ENCODE measurements at regions of chr4 and their contacts with region 1.

Region 1: DNA sequence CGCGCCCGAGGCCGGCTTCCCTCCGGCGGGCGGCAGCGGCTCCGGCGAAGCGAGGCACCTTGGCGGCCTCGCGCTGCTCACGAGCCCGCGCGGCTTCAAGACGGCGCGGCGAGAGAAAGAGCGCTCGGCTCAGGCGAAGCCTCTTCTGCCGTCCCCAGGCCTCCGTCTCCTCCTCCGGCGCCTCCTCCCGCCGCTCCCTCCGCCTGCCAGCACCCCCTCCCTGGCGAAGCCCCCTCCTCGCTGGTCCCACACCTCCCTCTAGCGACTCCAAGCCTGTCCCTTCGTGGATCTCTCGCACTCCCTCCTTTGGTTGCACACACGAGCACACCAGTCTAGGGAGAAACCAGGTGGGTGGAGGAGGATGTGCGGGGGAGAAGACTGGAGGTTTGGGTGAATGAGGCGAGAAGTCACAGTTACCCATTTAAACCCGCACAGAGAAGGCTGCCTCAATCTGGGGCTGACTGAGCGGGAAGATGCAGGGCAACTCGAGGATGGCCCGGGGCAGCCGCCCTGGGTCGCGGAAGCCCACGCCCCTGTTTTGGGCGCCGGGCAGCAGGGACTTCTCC is at the start of gene CAMK2D:
- DNase-seq: peak; percentile 82 to 93 (median 85)
- H3K4me3 ChIP-seq: peak within 1 kb of the TSS; percentile 73 to 87
- H3K4me3 Mint-ChIP-seq: peak within 1 kb of the TSS; percentile 93 to 98 (median 96)
- H3K27ac ChIP-seq: peak within 1 kb of the TSS; percentile 92
- H3K27ac Mint-ChIP-seq: peak within 1 kb of the TSS; percentile 91 to 100 (median 99)
- H3K4me1 ChIP-seq: peaks cover 36% of the 10 kb centered on the region
- H3K4me1 Mint-ChIP-seq: peaks cover 24 to 54% (median 25%) of the 10 kb centered on the region in 4 donors
- H3K27me3 ChIP-seq: no peaks in the 10 kb centered on the region
- H3K27me3 Mint-ChIP-seq: no peaks in the 10 kb centered on the region
- total RNA-seq, gene CAMK2D: 32.1 to 36.4 TPM

Region 2: DNA sequence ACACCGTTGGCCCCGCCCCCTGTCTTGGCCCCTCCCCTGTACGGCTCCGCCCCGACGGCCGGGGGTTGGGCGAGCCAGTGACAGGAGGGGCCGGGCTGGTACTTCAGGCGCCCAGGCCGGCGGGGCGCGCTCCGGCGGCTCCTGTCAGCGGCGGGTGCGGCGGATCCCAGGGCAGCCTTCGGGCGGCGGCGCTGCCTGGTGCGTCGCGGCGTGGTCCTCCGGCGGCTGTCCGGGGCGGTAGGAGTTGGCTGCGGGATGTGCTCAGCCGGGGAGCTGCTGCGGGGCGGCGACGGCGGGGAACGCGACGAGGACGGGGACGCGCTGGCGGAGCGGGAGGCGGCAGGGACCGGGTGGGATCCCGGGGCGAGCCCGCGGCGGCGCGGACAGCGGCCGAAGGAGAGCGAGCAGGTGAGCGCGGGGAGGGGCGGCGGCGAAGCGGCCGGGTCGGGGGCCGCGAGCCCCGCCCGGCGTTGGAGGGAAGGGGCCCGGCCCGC is 1616.3 kb before region 1 on chr4 and contains the start of gene FAM241A:
- CTCF ChIA-PET with region 1: no interaction called
- POLR2A ChIA-PET with region 1: no interaction called
- intact Hi-C with region 1: loop called (anchors 10 kb)
- DNase-seq: peak; percentile 86 to 89 (median 86)
- H3K4me3 ChIP-seq: peak within 1 kb of the TSS; percentile 82 to 88
- H3K4me3 Mint-ChIP-seq: peak within 1 kb of the TSS; percentile 87 to 99 (median 94)
- H3K27ac ChIP-seq: peak within 1 kb of the TSS; percentile 82
- H3K27ac Mint-ChIP-seq: peak within 1 kb of the TSS; percentile 85 to 99 (median 96)
- H3K4me1 ChIP-seq: peaks cover 29% of the 10 kb centered on the region
- H3K4me1 Mint-ChIP-seq: peaks cover 22 to 34% (median 26%) of the 10 kb centered on the region in 4 donors
- H3K27me3 ChIP-seq: no peaks in the 10 kb centered on the region
- H3K27me3 Mint-ChIP-seq: no peaks in the 10 kb centered on the region
- total RNA-seq, gene FAM241A: 2.7 TPM

Region 3: GRCh38 chr4:113355550-113356371 is 405.9 kb before region 1 on chr4:
- CTCF ChIA-PET with region 1: no interaction called
- POLR2A ChIA-PET with region 1: no interaction called
- intact Hi-C with region 1: loop called (anchors 5 kb)
- DNase-seq: peak; percentile 57 to 87 (median 62)
- H3K4me3 ChIP-seq: peak overlapping the region in 1 of 2 donors; percentile 15
- H3K4me3 Mint-ChIP-seq: peak overlapping the region; percentile 71 to 82 (median 78)
- H3K27ac ChIP-seq: no peak overlapping the region
- H3K27ac Mint-ChIP-seq: peak overlapping the region; percentile 80 to 91 (median 85)
- H3K4me1 ChIP-seq: peaks cover 19% of the 10 kb centered on the region
- H3K4me1 Mint-ChIP-seq: peaks cover 18 to 32% (median 27%) of the 10 kb centered on the region in 4 donors
- H3K27me3 ChIP-seq: no peaks in the 10 kb centered on the region
- H3K27me3 Mint-ChIP-seq: peaks cover 0 to 1% of the 10 kb centered on the region in 2 donors

Region 4: GRCh38 chr4:113564493-113564892 is 197.2 kb before region 1 on chr4:
- CTCF ChIA-PET with region 1: no interaction called
- POLR2A ChIA-PET with region 1: no interaction called
- intact Hi-C with region 1: loop called (anchors 5 kb)
- DNase-seq: no peak
- H3K4me3 ChIP-seq: no peak overlapping the region
- H3K4me3 Mint-ChIP-seq: peak overlapping the region in 6 of 8 donors; percentile 58 to 88 (median 73)
- H3K27ac ChIP-seq: no peak overlapping the region
- H3K27ac Mint-ChIP-seq: peak overlapping the region in 1 of 7 donors; percentile 59
- H3K4me1 ChIP-seq: peaks cover 38% of the 10 kb centered on the region
- H3K4me1 Mint-ChIP-seq: peaks cover 33 to 52% (median 41%) of the 10 kb centered on the region in 4 donors
- H3K27me3 ChIP-seq: no peaks in the 10 kb centered on the region
- H3K27me3 Mint-ChIP-seq: no peaks in the 10 kb centered on the region

Region 5: DNA sequence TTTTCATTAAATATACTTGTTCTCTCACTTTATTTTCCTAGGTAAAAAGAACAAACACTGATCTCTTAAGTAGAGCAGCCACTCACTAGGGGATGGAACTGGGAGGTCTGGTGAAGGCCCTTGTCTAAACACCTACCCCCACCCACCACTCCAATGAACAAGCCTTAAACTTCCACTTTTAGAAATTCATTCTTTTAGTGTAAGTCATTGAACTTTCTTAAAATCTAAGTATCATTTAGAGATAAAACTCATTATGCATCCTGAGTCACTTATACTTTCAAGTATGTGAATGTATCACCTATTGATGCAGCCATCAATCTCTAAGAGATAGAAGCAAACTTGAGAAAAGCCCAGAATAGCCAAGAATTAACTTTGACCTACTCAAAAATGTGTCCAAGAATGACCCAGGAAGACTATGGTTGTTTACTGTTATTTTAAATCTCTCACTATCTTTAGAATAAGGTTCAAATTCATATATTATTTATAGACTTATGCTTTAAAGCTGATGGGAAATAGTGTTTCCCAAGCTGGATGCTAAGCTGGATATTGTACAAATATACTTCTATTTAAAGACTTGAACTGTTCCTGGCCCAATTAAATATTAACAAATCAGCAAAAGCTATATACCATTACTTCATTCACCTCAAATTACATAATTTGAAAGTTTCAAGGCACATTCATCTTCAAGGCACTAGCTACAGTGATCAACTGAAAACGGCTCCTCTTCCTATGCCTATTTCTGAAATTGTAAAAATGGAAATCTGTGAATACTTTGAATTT is 49.6 kb before region 1 on chr4:
- CTCF ChIA-PET with region 1: no interaction called
- POLR2A ChIA-PET with region 1: no interaction called
- intact Hi-C with region 1: loop called (anchors 2 kb)
- DNase-seq: no peak
- H3K4me3 ChIP-seq: no peak overlapping the region
- H3K4me3 Mint-ChIP-seq: no peak overlapping the region
- H3K27ac ChIP-seq: no peak overlapping the region
- H3K27ac Mint-ChIP-seq: no peak overlapping the region
- H3K4me1 ChIP-seq: no peaks in the 10 kb centered on the region
- H3K4me1 Mint-ChIP-seq: peaks cover 13 to 24% (median 21%) of the 10 kb centered on the region in 4 donors
- H3K27me3 ChIP-seq: no peaks in the 10 kb centered on the region
- H3K27me3 Mint-ChIP-seq: no peaks in the 10 kb centered on the region

Region 6: DNA sequence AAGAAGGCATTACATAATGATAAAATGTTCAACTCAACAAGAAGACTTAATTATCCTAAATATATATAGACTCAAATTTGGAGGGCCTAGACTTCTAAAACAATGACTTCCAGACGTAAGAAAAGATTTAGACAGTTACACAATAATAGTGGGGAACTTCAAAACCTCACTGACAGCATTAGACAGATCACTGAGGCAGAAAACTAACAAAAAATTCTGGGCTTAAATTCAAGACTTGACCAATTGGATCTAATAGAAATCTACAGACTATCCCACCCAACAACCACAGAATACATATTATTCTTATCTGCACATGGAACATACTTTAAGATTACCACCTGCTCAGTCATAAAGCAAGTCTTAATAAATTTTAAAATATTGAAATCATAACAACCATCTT is 311.1 kb after region 1 on chr4:
- CTCF ChIA-PET with region 1: no interaction called
- POLR2A ChIA-PET with region 1: no interaction called
- intact Hi-C with region 1: loop called (anchors 5 kb)
- DNase-seq: no peak
- H3K4me3 ChIP-seq: no peak overlapping the region
- H3K4me3 Mint-ChIP-seq: no peak overlapping the region
- H3K27ac ChIP-seq: no peak overlapping the region
- H3K27ac Mint-ChIP-seq: no peak overlapping the region
- H3K4me1 ChIP-seq: no peaks in the 10 kb centered on the region
- H3K4me1 Mint-ChIP-seq: peaks cover 0 to 5% (median 3%) of the 10 kb centered on the region in 4 donors
- H3K27me3 ChIP-seq: no peaks in the 10 kb centered on the region
- H3K27me3 Mint-ChIP-seq: peaks cover 0 to 1% of the 10 kb centered on the region in 2 donors